Right ventricle myocardium inferior (tissue), 1 donor: ENCODE measurements at regions of chr1 and their contacts with region 1.

Region 1: GRCh38 chr1:52056163-52056936 is at the start of gene BTF3L4:
- DNase-seq: peak; percentile 99
- ATAC-seq: peak; percentile 98
- total RNA-seq, gene BTF3L4: 25.5 TPM

Region 2: GRCh38 chr1:51878616-51879336 is 177.6 kb before region 1 on chr1 and contains the start of gene NRDC:
- intact Hi-C with region 1: loop called (anchors 5 kb)
- DNase-seq: peak; percentile 100
- ATAC-seq: peak; percentile 98
- total RNA-seq, gene NRDC: 146 TPM

Region 3: DNA sequence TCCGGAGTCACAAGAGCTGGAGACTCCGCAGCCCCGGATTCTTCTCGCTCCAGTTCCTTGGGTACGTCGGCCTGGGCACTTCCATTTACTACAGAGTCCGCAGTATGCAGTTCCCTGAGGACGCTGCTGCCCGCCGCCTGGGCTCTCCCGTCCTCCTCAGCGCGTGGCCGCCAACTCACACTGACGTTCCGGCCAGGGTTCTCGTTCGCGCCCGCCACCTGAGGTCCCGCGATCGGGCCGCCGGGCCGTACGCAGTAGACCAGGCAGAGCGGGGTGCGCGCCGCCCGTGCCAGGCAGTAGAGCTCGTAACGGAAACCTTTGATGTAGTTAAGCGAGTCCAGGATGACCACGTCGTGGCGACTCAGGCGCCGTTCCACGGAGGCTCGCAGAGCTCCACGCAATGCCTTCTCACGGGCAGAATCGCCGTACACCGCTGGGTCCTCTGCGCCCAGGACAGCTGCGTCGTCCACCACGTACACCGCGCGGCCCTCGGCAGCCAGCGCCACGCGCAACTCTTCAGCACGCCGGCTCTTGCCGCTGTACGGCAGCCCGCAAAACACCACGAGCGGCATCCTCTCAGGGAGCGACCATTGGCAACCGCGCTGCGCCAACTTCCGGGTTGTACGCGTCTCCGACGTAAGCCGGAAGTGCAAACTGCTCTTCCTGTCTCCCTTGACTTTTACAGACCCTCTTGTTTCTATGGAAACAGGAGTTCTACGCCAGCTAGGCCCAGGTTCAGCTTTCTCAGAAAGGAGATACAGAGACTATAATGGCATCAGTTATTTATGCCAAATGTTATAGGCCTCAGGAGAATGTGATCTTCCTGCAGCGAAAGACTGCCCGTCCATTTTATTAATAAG is 22.9 kb before region 1 on chr1 and contains the start of gene KTI12:
- intact Hi-C with region 1: loop called (anchors 2 kb)
- DNase-seq: peak; percentile 94
- ATAC-seq: peak; percentile 96
- total RNA-seq, gene KTI12: 3.1 TPM

Region 4: DNA sequence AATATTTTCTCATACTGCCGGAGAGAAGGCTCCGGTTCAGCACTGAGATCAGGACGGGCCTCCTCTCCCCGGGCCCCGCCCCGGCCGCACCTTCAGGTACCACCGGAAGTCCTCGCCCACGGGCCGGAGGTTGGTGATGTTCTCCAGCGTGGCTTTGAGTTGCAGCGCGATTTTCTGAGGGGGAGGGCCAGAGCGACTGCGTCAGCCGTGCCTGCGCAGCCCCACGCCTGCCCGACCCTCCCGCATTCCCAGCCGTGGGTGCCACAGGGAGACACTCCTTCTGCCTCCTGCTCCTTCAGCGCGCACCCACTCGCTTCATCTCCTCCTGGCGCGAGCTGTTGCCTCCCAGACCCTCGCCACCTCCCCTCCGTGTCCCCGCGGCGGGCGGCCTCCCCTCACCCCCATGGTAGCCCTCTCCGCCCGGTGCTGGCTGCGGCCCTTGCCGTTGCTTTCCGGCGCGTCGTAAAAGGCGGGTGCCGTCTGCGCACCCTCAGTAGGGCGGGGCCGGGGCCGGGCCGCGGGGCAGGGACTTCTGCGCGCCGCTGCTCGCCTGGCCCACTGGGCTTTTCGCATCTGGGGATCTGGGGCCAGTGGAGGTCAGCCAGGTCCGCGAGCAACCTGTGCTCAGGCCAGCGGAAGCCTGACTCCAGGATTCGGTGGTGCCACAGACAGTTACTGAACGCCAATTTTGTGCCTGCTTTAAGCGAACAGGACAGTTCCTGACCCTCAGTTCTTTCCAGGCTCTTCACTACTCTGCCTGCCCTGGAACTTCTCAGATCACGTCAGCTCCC is 1164.0 kb after region 1 on chr1 and contains the start of gene CZIB:
- intact Hi-C with region 1: loop called (anchors 10 kb)
- DNase-seq: peak; percentile 98
- ATAC-seq: peak; percentile 98
- total RNA-seq, gene CZIB: 60.7 TPM